OCI-LY7 (cell line): ENCODE measurements at regions of chr16 and their contacts with region 1.

Region 1: GRCh38 chr16:85380905-85381737 is 232.0 kb upstream of the GSE1 start:
- DNase-seq: no peak
- H3K4me3 ChIP-seq: no peak overlapping the region
- H3K27ac ChIP-seq: no peak overlapping the region
- H3K4me1 ChIP-seq: no peaks in the 10 kb centered on the region
- CTCF ChIP-seq: no peak

Region 2: DNA sequence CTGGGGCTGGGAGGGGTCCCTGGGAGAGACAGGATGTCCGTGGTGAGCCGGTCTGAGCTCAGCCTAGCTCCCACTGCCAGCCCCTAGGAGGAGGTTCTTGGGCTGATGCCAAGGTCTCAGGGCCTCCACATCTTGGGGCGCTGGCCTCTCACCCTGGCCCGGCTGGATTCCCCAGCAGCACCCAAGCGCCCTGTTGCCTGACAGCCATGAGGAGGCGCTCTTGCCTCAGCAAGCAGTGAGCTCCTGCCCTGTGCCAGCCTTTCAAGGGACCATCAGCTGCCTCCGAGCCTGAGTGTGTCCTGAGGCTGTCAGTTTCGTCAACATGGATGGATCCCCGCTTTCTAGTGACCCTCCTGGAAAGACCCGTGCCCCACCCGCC is 33.9 kb before region 1 on chr16:
- CTCF ChIA-PET with region 1: interaction called, 17 read pairs
- POLR2A ChIA-PET with region 1: no interaction called
- intact Hi-C with region 1: no loop called
- DNase-seq: no peak
- H3K4me3 ChIP-seq: no peak overlapping the region
- H3K27ac ChIP-seq: no peak overlapping the region
- H3K4me1 ChIP-seq: no peaks in the 10 kb centered on the region
- CTCF ChIP-seq: peak; percentile 56

Region 3: GRCh38 chr16:85610508-85611332 is 229.6 kb after region 1 on chr16:
- CTCF ChIA-PET with region 1: no interaction called
- POLR2A ChIA-PET with region 1: no interaction called
- intact Hi-C with region 1: no loop called
- DNase-seq: peak; percentile 91
- H3K4me3 ChIP-seq: peak overlapping the region; percentile 76
- H3K27ac ChIP-seq: peak overlapping the region; percentile 86
- H3K4me1 ChIP-seq: peaks cover 75% of the 10 kb centered on the region
- CTCF ChIP-seq: peak; percentile 94